Naive thymus-derived CD4-positive, alpha-beta T cell (primary cell): ENCODE measurements at regions of chr3 and their contacts with region 1.

Region 1: GRCh38 chr3:46078712-46079400 is 51.6 kb upstream of the XCR1 start:
- DNase-seq: peak; percentile 66 to 89 (median 85)
- ATAC-seq: peak; percentile 100
- H3K4me3 ChIP-seq: no peak overlapping the region
- H3K4me3 Mint-ChIP-seq: peak overlapping the region in 5 of 10 donors; percentile 10 to 63 (median 32)
- H3K27ac ChIP-seq: no peak overlapping the region
- H3K27ac Mint-ChIP-seq: peak overlapping the region in 2 of 9 donors; percentile 3 to 33
- H3K4me1 ChIP-seq: peaks cover 0 to 6% of the 10 kb centered on the region in 2 donors
- H3K4me1 Mint-ChIP-seq: peaks cover 0 to 44% (median 5%) of the 10 kb centered on the region in 7 donors
- H3K27me3 ChIP-seq: no peaks in the 10 kb centered on the region
- H3K27me3 Mint-ChIP-seq: peaks cover 0 to 34% (median 0%) of the 10 kb centered on the region in 5 donors

Region 2: GRCh38 chr3:45037734-45038455 is 1041.0 kb before region 1 on chr3:
- CTCF ChIA-PET with region 1: no interaction called
- POLR2A ChIA-PET with region 1: no interaction called
- intact Hi-C with region 1: loop called (anchors 2 kb)
- DNase-seq: peak; percentile 71 to 94 (median 92)
- ATAC-seq: peak; percentile 98
- H3K4me3 ChIP-seq: no peak overlapping the region
- H3K4me3 Mint-ChIP-seq: peak overlapping the region in 8 of 10 donors; percentile 33 to 84 (median 74)
- H3K27ac ChIP-seq: no peak overlapping the region
- H3K27ac Mint-ChIP-seq: no peak overlapping the region
- H3K4me1 ChIP-seq: peaks cover 9 to 29% of the 10 kb centered on the region in 2 donors
- H3K4me1 Mint-ChIP-seq: peaks cover 25 to 70% (median 58%) of the 10 kb centered on the region in 7 donors
- H3K27me3 ChIP-seq: no peaks in the 10 kb centered on the region
- H3K27me3 Mint-ChIP-seq: peaks cover 0 to 32% (median 8%) of the 10 kb centered on the region in 5 donors

Region 3: DNA sequence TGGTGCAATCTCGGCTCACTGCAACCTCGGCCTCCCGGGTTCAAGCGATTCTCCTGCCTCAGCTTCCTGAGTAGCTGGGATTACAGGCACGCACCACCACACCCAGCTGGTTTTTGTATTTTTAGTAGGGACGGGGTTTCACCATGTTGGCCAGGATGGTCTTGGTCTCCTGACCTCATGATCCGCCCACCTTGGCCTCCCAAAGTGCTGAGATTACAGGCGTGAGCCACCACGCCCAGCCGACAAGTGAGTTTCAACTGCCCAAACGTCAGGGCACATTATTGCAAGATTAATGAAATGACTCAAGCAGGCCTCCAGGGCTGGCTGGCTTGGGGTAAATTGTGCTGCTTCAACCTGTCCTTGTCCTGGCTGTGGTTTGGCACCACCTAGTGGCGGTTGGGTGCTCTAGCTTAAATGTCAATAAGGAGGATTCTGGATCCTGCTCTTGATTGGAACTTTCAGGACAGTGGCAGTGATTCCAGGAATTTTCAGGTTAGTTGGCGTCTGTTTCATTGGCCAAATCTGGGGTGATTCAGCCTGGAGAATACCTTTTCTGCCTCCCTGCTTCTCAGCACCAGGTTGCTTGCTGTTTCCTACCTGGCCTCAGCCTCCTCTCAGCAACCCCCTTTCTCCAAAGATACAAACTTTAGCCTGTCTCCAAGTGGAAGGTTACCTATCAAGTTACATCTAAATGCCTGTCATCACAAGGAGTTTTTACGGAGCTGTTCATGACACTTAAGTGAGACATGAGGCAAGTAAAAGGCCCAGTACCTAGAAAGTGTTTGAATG is 422.1 kb before region 1 on chr3:
- CTCF ChIA-PET with region 1: interaction called, 3 read pairs
- POLR2A ChIA-PET with region 1: no interaction called
- intact Hi-C with region 1: loop called in 1 of 2 experiments (anchors 5 kb)
- DNase-seq: peak; percentile 65 to 83 (median 78)
- ATAC-seq: peak; percentile 94
- H3K4me3 ChIP-seq: no peak overlapping the region
- H3K4me3 Mint-ChIP-seq: no peak overlapping the region
- H3K27ac ChIP-seq: no peak overlapping the region
- H3K27ac Mint-ChIP-seq: peak overlapping the region in 1 of 9 donors; percentile 30
- H3K4me1 ChIP-seq: no peaks in the 10 kb centered on the region
- H3K4me1 Mint-ChIP-seq: peaks cover 6 to 27% (median 18%) of the 10 kb centered on the region in 7 donors
- H3K27me3 ChIP-seq: no peaks in the 10 kb centered on the region
- H3K27me3 Mint-ChIP-seq: no peaks in the 10 kb centered on the region

Region 4: DNA sequence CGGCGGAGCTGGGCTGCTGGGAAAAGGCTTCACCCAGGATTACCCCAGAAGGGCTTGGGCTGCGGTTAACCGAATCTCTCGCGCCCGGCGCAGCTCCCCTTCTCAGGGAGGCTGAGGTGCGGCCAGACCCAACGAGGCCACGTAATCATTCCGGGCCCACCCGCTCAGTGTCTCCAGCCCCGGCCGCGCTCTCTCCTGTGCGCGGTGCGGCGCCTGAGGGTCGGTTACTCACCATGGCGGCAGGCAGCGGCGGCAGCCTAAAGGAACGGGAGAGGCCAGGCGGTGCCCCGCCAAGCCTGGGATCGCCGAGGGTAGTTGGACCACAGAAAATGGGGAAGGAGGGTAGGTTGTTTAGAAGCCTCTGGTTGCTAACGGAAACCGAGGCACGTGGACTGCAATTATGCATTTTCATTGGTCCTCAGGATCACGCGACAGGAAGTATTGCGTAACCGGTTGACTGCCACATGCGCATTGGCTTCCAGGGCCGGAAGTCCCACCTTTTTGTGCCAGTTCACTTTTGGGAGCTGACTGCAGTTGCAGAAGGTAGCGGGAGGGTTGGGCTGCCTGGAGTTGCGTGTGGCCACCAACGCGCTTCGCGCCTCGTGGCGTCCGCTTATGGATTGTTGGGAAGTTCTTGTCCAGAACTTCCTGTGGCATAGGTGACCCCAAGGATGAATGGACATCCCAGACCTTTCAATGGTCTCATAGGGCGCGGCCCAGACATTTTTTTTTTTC is 236.9 kb before region 1 on chr3 and contains the start of gene LZTFL1:
- CTCF ChIA-PET with region 1: interaction called, 3 read pairs
- POLR2A ChIA-PET with region 1: no interaction called
- intact Hi-C with region 1: loop called in 1 of 2 experiments (anchors 5 kb)
- DNase-seq: peak; percentile 62 to 94 (median 91)
- ATAC-seq: peak; percentile 94
- H3K4me3 ChIP-seq: peak within 1 kb of the TSS; percentile 77
- H3K4me3 Mint-ChIP-seq: peak within 1 kb of the TSS; percentile 90 to 97 (median 94)
- H3K27ac ChIP-seq: peak within 1 kb of the TSS; percentile 88
- H3K27ac Mint-ChIP-seq: peak within 1 kb of the TSS; percentile 86 to 98 (median 94)
- H3K4me1 ChIP-seq: peaks cover 8 to 13% of the 10 kb centered on the region in 2 donors
- H3K4me1 Mint-ChIP-seq: peaks cover 6 to 41% (median 25%) of the 10 kb centered on the region in 7 donors
- H3K27me3 ChIP-seq: no peaks in the 10 kb centered on the region
- H3K27me3 Mint-ChIP-seq: peaks cover 0 to 65% (median 0%) of the 10 kb centered on the region in 5 donors
- total RNA-seq, gene LZTFL1: 8.5 to 15.7 (median 12.6) TPM

Region 5: DNA sequence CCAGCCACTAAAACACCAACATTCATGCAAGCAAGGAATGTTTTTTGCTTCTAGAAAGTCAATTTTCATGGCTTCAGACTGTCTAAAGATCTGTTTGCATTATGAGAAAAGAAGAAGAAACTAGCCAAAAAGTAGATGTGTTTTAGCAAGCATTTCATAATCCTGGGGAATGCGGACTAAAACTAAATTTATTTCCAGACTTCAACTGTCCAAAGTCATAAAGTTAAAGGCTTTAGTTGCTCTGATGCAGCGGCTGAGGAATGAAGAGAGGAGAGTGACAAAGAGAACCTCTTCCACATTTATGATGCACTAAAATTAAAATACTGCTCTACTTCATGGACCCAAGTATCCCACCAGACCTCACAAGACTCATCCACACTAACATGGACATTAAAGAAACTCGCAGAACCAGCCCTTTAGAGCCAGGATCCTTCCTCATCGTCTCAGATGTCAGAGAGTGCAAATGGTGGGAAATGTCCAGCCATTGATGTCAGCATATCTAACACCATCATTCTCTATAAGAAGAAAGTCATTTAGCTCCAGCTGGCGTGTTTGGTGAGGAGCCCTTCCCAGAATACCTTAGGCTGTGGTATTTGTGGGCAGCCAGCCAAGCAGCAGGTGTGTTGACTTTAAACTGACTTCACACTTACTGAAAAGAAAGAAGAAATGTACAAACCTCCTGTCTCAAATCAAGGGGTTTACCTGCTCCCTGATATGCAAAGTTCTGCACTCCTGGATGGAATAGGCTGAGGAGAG is 100.7 kb before region 1 on chr3:
- CTCF ChIA-PET with region 1: interaction called, 29 read pairs
- POLR2A ChIA-PET with region 1: no interaction called
- intact Hi-C with region 1: loop called in 1 of 2 experiments (anchors 2 kb)
- DNase-seq: peak in 7 of 9 donors; percentile 23 to 57 (median 37)
- ATAC-seq: no peak
- H3K4me3 ChIP-seq: no peak overlapping the region
- H3K4me3 Mint-ChIP-seq: peak overlapping the region; percentile 43 to 87 (median 70)
- H3K27ac ChIP-seq: peak overlapping the region; percentile 32
- H3K27ac Mint-ChIP-seq: peak overlapping the region; percentile 68 to 94 (median 85)
- H3K4me1 ChIP-seq: peaks cover 36 to 92% of the 10 kb centered on the region in 2 donors
- H3K4me1 Mint-ChIP-seq: peaks cover 30 to 86% (median 53%) of the 10 kb centered on the region in 7 donors
- H3K27me3 ChIP-seq: no peaks in the 10 kb centered on the region
- H3K27me3 Mint-ChIP-seq: no peaks in the 10 kb centered on the region

Region 6: GRCh38 chr3:46049116-46049515 is 29.7 kb before region 1 on chr3:
- CTCF ChIA-PET with region 1: interaction called, 6 read pairs
- POLR2A ChIA-PET with region 1: interaction called, 3 read pairs
- intact Hi-C with region 1: loop called in 1 of 2 experiments (anchors 1 kb)
- DNase-seq: no peak
- ATAC-seq: no peak
- H3K4me3 ChIP-seq: no peak overlapping the region
- H3K4me3 Mint-ChIP-seq: no peak overlapping the region
- H3K27ac ChIP-seq: no peak overlapping the region
- H3K27ac Mint-ChIP-seq: peak overlapping the region in 2 of 9 donors; percentile 14 to 36
- H3K4me1 ChIP-seq: peaks cover 13 to 19% of the 10 kb centered on the region in 2 donors
- H3K4me1 Mint-ChIP-seq: peaks cover 21 to 44% (median 33%) of the 10 kb centered on the region in 7 donors
- H3K27me3 ChIP-seq: no peaks in the 10 kb centered on the region
- H3K27me3 Mint-ChIP-seq: peaks cover 0 to 49% (median 6%) of the 10 kb centered on the region in 5 donors

Region 7: DNA sequence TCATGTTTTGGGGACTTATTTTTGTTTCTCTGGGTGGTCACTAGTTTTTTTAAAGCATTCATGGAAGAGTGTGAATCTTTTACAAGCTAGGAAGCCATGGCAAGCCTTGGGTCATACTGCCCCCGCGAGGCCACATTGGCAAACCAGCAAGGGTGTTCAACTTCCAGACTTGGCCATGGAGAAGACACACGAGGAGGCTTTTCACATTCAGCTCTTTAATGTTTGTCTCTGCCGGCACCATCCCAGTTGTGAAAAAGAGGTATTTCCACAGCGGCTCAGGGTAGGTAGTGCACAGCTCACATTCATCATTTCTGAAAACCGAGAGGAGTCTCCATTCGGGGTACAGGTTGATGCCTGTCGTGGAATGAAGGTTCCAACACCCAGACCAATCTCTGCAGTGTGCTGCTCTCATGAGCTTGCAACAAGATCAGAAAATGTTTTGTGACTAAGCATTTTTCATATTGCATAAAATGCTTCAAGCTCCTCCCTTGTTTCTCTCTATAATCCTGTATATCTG is 299.6 kb after region 1 on chr3:
- CTCF ChIA-PET with region 1: interaction called, 5 read pairs
- POLR2A ChIA-PET with region 1: no interaction called
- intact Hi-C with region 1: loop called (anchors 1 to 2 kb)
- DNase-seq: peak; percentile 24 to 67 (median 46)
- ATAC-seq: peak; percentile 68
- H3K4me3 ChIP-seq: no peak overlapping the region
- H3K4me3 Mint-ChIP-seq: peak overlapping the region in 1 of 10 donors; percentile 8
- H3K27ac ChIP-seq: no peak overlapping the region
- H3K27ac Mint-ChIP-seq: peak overlapping the region in 2 of 9 donors; percentile 0 to 4
- H3K4me1 ChIP-seq: peaks cover 3 to 40% of the 10 kb centered on the region in 2 donors
- H3K4me1 Mint-ChIP-seq: peaks cover 23 to 48% (median 43%) of the 10 kb centered on the region in 7 donors
- H3K27me3 ChIP-seq: no peaks in the 10 kb centered on the region
- H3K27me3 Mint-ChIP-seq: peaks cover 0 to 24% (median 0%) of the 10 kb centered on the region in 5 donors